Thyroid gland (tissue), 4 donors: ENCODE measurements at regions of chr10 and their contacts with region 1.

Region 1: DNA sequence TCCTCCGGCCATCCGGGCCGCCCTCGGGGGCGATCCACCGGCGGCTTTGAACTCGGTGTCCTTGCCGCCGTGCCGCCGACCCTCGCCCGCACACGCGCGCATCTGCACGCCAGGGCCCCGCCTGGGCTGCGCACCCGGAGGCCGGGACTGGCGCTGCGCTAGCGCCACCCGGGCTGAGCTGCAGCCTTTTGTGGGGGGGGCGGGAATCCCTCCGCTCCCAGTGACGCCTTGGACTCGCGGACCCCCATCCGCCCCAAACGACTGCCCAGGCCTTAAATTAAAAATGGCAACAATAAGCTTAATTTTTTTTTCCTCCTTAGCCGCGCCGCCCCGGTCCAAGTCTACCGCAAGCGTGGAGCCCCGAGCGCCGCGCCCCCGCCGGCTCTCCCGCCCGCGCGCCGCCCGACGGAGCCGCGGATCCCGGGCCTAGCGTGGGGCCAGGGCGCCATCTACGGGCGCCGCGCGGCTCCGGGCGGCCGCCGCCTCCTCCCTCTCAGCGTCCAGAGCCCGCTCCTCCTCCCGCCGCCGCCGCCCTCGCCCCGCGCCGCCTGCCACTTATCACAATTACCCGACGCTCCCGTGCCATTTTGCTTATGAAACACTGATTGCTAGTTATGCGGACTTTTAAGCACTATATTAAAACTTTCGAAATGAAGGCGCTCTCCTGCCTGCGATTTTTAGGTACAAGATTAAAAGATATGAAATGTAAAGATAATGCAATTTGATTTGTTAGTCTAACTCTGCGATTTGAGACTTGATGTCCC is 7.5 kb upstream of the EBF3 start:
- DNase-seq: peak; percentile 40 to 46
- H3K4me3 ChIP-seq: peak overlapping the region in 1 of 3 donors; percentile 12
- H3K27ac ChIP-seq: no peak overlapping the region
- H3K4me1 ChIP-seq: peaks cover 6 to 14% of the 10 kb centered on the region in 2 donors
- H3K27me3 ChIP-seq: peaks cover 38% of the 10 kb centered on the region
- CTCF ChIP-seq: peak in 3 of 6 experiments; percentile 33 to 76 (median 58)
- POLR2A ChIP-seq: no peak

Region 2: DNA sequence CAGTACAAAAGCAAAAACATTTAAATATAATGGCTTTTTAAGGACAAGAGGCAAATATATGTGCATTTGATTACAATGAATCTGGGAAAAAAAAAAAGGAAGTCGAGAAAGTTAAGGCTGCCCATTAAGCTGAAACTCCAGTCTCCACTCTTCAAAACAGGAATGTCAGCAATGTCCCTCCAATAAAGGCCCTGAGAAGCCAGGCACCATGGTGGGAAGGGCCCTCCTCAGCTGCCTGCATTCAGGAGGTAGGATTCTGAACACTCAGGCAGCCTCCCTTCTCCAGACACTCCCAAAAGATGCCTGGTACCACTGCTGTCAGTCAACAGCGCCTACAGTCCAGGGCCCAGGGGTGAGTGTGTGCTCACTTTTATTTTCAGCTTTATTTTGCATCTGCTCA is 625.8 kb before region 1 on chr10:
- intact Hi-C with region 1: loop called (anchors 10 kb)
- DNase-seq: no peak
- H3K4me3 ChIP-seq: no peak overlapping the region
- H3K27ac ChIP-seq: no peak overlapping the region
- H3K4me1 ChIP-seq: no peaks in the 10 kb centered on the region
- H3K27me3 ChIP-seq: no peaks in the 10 kb centered on the region
- CTCF ChIP-seq: no peak
- POLR2A ChIP-seq: no peak